ENCODE measurements at regions of chr11 and their contacts with region 1.

Region 1: GRCh38 chr11:18731949-18732821 is 6.2 kb upstream of the IGSF22 start:
- DNase-seq: no peak
- H3K4me3 ChIP-seq: no peak overlapping the region
- H3K27ac ChIP-seq: no peak overlapping the region
- H3K4me1 ChIP-seq: no peaks in the 10 kb centered on the region
- H3K27me3 ChIP-seq: no peaks in the 10 kb centered on the region
- CTCF ChIP-seq: peak; percentile 86 to 94 (median 88)
- EP300 ChIP-seq: no peak
- POLR2A ChIP-seq: no peak

Region 2: GRCh38 chr11:18115360-18116127 is 616.6 kb before region 1 on chr11:
- intact Hi-C with region 1: loop called (anchors 2 kb)
- DNase-seq: peak; percentile 66
- H3K4me3 ChIP-seq: no peak overlapping the region
- H3K27ac ChIP-seq: no peak overlapping the region
- H3K4me1 ChIP-seq: no peaks in the 10 kb centered on the region
- H3K27me3 ChIP-seq: peaks cover 0 to 4% (median 0%) of the 10 kb centered on the region in 3 donors
- CTCF ChIP-seq: peak; percentile 58 to 84 (median 60)
- EP300 ChIP-seq: no peak
- POLR2A ChIP-seq: no peak

Region 3: DNA sequence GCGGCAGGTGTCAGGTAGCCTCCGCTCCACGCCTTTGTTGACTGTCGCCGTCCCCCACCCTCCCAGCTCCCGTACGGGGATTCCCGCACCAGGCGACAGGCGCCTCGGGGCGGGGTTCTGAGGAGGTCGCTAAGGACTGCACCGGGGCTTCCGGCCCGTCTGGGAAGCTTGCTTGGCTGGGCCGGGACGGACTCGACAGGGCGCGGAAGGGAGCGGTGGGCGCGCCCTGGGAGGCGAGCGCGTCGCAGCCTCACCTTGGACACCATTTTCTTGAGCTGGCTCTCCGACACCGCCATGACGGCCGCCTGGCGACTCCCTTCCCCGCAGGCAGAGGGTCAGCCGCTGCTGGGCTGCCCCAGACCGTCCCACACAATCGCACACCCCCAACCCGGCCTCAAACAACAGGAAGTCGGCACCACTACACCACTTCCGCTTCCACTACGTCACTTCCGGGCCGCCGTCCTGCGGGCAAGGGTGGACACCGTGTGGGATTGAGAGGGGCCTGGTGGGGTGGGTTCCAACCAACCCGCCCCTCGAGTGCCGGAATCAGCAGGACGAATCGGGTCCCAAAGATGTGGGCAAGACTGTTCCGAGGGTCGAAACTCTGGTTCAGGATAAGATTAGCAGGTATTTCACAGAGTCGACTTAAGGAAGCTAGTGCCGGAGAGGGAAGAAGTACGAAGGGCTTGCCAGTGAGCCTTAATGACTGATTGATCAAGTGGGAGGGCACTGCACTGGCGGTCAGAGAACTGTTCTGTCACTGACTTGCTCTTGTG is 205.5 kb before region 1 on chr11 and contains the start of gene TSG101:
- intact Hi-C with region 1: loop called (anchors 5 kb)
- DNase-seq: peak; percentile 95
- H3K4me3 ChIP-seq: peak within 1 kb of the TSS; percentile 82 to 95 (median 90)
- H3K27ac ChIP-seq: peak within 1 kb of the TSS; percentile 88 to 95 (median 92)
- H3K4me1 ChIP-seq: peaks cover 0 to 27% (median 22%) of the 10 kb centered on the region in 4 donors
- H3K27me3 ChIP-seq: no peaks in the 10 kb centered on the region
- CTCF ChIP-seq: no peak
- EP300 ChIP-seq: peak in 1 of 4 donors; percentile 14
- POLR2A ChIP-seq: peak; percentile 91 to 93
- total RNA-seq, gene TSG101: 70.3 to 100 (median 89.8) TPM

Region 4: DNA sequence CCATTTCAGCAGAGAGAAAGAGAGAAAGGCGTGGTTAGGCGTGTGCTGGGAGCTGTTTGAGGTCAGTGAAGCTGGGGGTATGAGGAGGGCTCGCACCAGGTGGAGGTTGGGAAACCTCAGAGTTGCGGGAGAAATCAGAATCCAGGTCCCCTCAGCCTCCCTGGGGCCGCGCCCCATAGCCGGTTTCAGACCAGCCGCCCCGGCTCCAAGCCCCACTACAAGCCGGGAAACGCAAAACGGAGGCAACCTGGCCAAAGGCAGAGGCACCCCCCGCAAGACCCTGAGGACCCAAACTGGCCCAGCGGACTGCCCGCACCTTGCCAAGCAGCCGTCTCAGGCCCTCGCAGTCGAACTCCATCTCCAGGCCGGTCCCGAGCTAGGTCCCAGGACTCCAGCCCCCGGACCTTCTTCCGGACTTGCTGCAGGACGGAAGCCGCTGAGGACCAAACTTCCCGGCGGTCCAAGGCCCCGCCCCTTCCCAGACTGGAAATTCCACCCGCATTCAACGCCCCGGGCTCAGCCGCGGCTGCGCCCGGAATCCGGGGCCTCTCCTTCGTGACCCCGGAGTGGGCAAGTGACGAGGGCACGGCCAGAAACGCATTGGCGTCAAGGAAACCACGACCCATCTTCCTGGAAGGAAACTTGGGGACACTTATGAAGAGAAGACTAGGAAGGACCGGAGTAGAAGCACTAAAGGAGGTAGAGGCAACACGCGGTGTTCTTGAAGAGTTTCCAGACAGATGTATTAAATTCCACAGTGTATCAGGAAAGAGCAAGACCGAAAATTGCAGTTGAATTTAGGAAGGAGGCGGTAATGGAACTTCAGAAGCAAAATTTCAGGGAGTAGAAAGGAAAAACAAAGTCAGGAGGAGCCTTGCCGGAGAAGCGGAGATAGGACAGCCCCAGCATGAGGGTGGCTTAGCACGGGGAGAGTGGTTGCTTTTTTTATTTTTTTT is 143.6 kb before region 1 on chr11 and contains the start of gene UEVLD:
- intact Hi-C with region 1: loop called (anchors 2 kb)
- DNase-seq: peak; percentile 96
- H3K4me3 ChIP-seq: peak within 1 kb of the TSS; percentile 70 to 88 (median 84)
- H3K27ac ChIP-seq: peak within 1 kb of the TSS; percentile 85 to 88 (median 86)
- H3K4me1 ChIP-seq: peaks cover 0 to 40% (median 35%) of the 10 kb centered on the region in 4 donors
- H3K27me3 ChIP-seq: no peaks in the 10 kb centered on the region
- CTCF ChIP-seq: no peak
- EP300 ChIP-seq: peak in 1 of 4 donors; percentile 35
- POLR2A ChIP-seq: peak; percentile 72 to 75
- total RNA-seq, gene UEVLD: 22.3 to 40.3 (median 28.8) TPM

Region 5: GRCh38 chr11:18698341-18699268 is 33.6 kb before region 1 on chr11 and contains the start of gene TMEM86A:
- intact Hi-C with region 1: loop called (anchors 5 kb)
- DNase-seq: peak; percentile 97
- H3K4me3 ChIP-seq: peak within 1 kb of the TSS; percentile 62 to 98 (median 78)
- H3K27ac ChIP-seq: peak within 1 kb of the TSS; percentile 76 to 82 (median 77)
- H3K4me1 ChIP-seq: peaks cover 3 to 18% (median 15%) of the 10 kb centered on the region in 4 donors
- H3K27me3 ChIP-seq: no peaks in the 10 kb centered on the region
- CTCF ChIP-seq: no peak
- EP300 ChIP-seq: no peak
- POLR2A ChIP-seq: peak in 1 of 2 donors; percentile 43
- total RNA-seq, gene TMEM86A: 3.7 to 5.3 (median 4.8) TPM